ENCODE measurements at regions of chr6 and their contacts with region 1.

Region 1: DNA sequence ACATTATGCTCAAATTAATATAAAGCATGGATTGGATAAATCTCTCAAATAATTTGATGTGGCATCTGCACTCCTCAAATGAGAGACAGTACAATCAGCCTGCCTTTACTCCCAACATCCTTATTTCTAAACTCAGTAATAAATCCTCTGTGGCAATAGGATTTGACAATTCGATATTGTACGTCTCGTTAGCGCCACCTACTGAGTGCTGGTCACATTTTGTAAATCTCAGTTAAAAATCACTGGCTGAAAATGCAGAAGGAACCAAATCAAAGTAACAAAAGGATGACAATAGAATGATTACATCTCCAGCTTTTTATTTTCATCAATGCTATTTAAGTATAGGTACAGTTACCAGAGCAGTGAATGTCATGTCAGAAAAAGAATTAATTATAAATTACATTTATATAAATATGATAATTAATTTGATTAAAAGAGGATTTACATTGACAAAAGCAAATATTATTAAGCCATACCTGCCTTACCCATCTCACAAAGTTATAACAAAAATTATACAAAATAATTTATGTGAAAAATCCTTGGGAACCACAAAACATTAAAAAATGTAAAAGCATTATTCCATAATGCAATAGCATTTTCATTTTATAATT is 20.2 kb upstream of the GJE1 start:
- DNase-seq: peak; percentile 28
- CTCF ChIP-seq: peak; percentile 81

Region 2: DNA sequence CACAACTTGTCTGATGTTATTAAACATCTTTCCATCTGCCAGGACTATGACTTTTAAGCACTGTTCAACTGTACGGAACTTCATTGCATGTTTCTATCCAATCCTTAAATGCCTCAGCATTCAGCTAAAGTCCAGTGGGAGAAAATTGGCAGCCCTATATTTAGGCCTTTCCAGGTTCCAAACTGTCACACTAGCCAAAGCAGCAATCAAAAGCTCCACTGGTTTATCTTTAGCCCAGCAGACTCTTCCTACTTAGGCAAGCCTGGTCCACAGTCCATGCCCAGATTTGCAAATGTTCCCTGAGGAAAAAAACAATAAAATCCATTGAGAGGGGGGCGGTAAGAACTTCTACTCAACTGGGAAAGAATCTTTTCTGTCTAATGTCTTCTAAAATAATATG is 329.0 kb before region 1 on chr6:
- CTCF ChIA-PET with region 1: no interaction called
- POLR2A ChIA-PET with region 1: no interaction called
- DNase-seq: no peak
- CTCF ChIP-seq: no peak

Region 3: GRCh38 chr6:141988954-141989705 is 123.4 kb before region 1 on chr6:
- CTCF ChIA-PET with region 1: interaction called, 41 read pairs
- POLR2A ChIA-PET with region 1: no interaction called
- DNase-seq: peak; percentile 23
- CTCF ChIP-seq: peak; percentile 46

Measured in GM10248 (cell line).